ENCODE measurements at regions of chr5 and their contacts with region 1.

Region 1: GRCh38 chr5:71887680-71888079 is 168.6 kb downstream of the CARTPT start:
- DNase-seq: no peak
- ATAC-seq: peak in 5 of 8 donors; percentile 54 to 63 (median 56)
- H3K4me3 ChIP-seq: peak overlapping the region in 1 of 10 donors; percentile 13
- H3K27ac ChIP-seq: peak overlapping the region in 2 of 10 donors; percentile 8 to 28
- H3K4me1 ChIP-seq: peaks cover 4 to 24% (median 15%) of the 10 kb centered on the region in 9 donors
- H3K27me3 ChIP-seq: no peaks in the 10 kb centered on the region
- CTCF ChIP-seq: no peak

Region 2: DNA sequence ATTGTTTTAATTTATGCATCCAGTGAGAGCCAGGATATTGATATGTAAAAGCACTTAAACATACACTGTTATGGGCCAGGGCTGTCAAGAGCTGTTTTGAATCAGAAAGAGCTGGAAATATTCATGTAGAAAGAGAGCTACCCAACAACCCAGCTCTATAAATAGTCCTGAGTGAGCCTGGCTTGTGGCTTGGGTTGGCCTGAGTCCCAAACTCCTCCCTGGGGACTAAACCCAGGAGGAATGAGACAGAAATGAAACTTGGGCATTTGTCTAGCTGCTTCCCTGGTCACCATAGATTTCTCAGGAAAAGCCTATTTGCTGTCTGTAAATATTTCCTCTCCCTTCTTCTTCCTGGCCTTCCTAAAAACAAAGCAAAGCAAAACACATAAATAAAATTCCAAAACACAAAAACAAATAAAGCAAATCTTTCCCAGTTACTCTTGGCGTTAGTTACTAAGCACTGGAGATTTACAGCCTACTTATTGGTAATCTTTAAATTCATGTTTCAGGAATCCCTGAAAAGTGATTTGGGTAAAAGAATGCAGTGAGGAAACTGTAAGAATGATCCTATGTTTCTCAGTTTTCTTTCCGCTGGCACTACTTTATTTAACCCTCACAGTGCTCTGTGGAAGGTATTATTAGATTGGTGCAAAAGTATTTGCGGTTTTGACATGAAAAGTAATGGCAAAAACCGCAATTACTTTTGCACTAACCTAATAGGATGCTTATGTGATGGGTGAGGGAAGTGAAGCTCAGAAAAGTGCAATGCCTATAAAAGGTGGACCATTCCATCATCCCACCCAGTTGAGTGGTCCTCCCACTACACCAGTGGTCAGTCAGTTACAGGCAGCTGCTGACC is 56.8 kb before region 1 on chr5:
- intact Hi-C with region 1: loop called in 2 of 10 experiments (anchors 10 kb)
- DNase-seq: peak; percentile 80
- ATAC-seq: peak; percentile 83 to 98 (median 91)
- H3K4me3 ChIP-seq: no peak overlapping the region
- H3K27ac ChIP-seq: peak overlapping the region; percentile 28 to 85 (median 64)
- H3K4me1 ChIP-seq: peaks cover 0 to 25% (median 15%) of the 10 kb centered on the region in 9 donors
- H3K27me3 ChIP-seq: no peaks in the 10 kb centered on the region
- CTCF ChIP-seq: no peak

Region 3: GRCh38 chr5:71974165-71974564 is 86.5 kb after region 1 on chr5:
- intact Hi-C with region 1: loop called in 1 of 10 experiments (anchors 10 kb)
- DNase-seq: peak in 1 of 2 donors; percentile 11
- ATAC-seq: peak in 7 of 8 donors; percentile 28 to 82 (median 58)
- H3K4me3 ChIP-seq: no peak overlapping the region
- H3K27ac ChIP-seq: peak overlapping the region; percentile 39 to 71 (median 58)
- H3K4me1 ChIP-seq: peaks cover 0 to 24% (median 15%) of the 10 kb centered on the region in 9 donors
- H3K27me3 ChIP-seq: no peaks in the 10 kb centered on the region
- CTCF ChIP-seq: no peak

Region 4: GRCh38 chr5:72723581-72723980 is 835.9 kb after region 1 on chr5:
- intact Hi-C with region 1: no loop called
- DNase-seq: no peak
- ATAC-seq: no peak
- H3K4me3 ChIP-seq: no peak overlapping the region
- H3K27ac ChIP-seq: no peak overlapping the region
- H3K4me1 ChIP-seq: no peaks in the 10 kb centered on the region
- H3K27me3 ChIP-seq: peaks cover 0 to 8% (median 0%) of the 10 kb centered on the region in 7 donors
- CTCF ChIP-seq: no peak

Measured in heart right ventricle (tissue), 16 donors.